ENCODE measurements at regions of chr19 and their contacts with region 1.

Region 1: DNA sequence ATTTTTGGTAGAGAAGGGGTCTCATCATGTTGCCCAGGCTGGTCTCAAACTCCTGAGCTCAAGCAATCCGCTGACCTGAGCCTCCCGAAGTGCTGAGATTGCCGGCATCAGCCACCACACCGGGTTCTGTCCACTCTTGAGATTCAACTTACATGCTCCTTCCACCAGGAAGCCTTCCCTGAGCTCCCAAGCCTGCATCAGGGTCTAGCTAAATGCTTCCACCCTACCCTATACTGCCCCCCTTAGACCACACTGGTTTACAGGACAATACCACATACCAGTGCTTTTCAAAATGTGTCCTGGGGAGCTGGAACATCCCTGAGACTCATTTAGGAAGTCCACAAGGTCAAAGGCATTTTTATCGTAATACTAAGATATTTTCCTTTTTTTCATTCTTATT is 15.1 kb upstream of the CACNG8 start:
- DNase-seq: no peak
- ATAC-seq: peak; percentile 83
- H3K4me3 Mint-ChIP-seq: no peak overlapping the region
- H3K27ac Mint-ChIP-seq: no peak overlapping the region; the same call in 1 of the 2 replicates
- H3K4me1 Mint-ChIP-seq: peaks cover 42% of the 10 kb centered on the region
- H3K27me3 Mint-ChIP-seq: no peaks in the 10 kb centered on the region
- CTCF ChIP-seq: no peak

Region 2: DNA sequence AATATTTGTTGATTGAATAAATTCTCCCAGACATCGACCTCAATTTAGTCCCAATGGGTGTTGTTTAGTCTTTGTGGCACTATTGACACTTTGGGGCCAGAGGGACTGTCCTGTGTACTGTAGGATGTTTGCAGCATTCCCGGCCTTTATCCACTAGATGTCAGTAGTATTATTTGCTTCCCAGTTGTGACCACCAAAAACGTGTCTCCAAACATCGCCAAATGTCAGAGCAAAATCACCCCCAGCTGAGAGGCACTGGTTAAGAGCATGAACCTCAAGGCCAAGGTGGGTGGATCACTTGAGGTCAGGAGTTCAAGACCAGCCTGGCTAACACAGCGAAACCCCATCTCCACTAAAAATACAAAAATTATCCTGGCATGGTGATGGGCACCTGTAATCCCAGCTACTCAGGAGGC is 138.9 kb before region 1 on chr19:
- CTCF ChIA-PET with region 1: interaction called, 34 read pairs
- POLR2A ChIA-PET with region 1: no interaction called
- DNase-seq: peak; percentile 40
- ATAC-seq: peak; percentile 74
- H3K4me3 Mint-ChIP-seq: no peak overlapping the region
- H3K27ac Mint-ChIP-seq: no peak overlapping the region
- H3K4me1 Mint-ChIP-seq: peaks cover 10% of the 10 kb centered on the region
- H3K27me3 Mint-ChIP-seq: peaks cover 9% of the 10 kb centered on the region
- CTCF ChIP-seq: no peak

Region 3: DNA sequence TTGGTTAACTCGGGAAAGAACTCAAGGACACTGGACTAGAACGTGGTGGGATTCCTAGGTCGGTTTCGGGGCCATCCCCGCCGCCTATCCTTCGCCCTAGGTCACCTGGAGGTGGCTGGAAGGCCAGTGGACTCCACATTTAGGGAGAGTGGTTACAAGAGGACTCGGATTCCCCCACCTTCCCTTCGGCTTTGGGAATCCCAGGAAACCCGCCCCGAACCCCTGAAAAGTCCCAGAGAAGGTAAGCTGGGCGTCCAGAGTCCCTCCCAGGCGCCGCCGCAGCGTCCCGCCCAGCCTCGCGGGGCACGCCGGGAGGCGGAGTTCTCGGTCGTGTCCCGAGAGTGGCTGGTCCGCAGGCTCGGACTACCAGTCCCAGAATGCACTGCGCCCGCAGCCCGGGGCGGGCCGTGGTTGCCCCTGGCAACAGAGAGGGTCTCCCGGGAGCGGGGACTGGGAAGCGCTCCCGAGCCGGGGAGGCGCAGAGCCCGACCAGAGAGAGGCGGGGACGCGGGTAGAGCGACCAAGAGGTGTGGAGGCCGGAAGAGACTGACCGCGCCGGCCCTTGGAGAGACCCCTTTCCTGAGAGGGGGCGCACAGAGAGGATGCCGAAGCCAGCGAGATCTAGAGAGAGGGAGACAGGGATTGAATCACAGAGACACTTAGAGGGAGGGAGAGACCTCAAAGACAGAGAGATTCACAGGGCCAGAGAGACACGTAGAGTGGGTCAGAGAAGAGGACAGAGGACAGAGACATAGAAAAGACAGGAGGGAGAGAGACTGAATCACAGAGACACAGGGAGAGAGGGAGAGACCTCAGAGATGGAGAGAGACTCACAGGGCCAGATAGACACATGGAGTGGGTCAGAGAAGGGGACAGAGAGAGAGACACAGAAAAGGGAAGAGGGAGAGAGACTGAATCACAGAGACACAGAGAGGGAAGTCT is 68.2 kb before region 1 on chr19:
- CTCF ChIA-PET with region 1: interaction called, 14 read pairs
- POLR2A ChIA-PET with region 1: interaction called, 9 read pairs
- DNase-seq: peak; percentile 100
- ATAC-seq: peak; percentile 84
- H3K4me3 Mint-ChIP-seq: no peak overlapping the region
- H3K27ac Mint-ChIP-seq: peak overlapping the region; percentile 81
- H3K4me1 Mint-ChIP-seq: peaks cover 27% of the 10 kb centered on the region
- H3K27me3 Mint-ChIP-seq: peaks cover 11% of the 10 kb centered on the region
- CTCF ChIP-seq: no peak

Region 4: DNA sequence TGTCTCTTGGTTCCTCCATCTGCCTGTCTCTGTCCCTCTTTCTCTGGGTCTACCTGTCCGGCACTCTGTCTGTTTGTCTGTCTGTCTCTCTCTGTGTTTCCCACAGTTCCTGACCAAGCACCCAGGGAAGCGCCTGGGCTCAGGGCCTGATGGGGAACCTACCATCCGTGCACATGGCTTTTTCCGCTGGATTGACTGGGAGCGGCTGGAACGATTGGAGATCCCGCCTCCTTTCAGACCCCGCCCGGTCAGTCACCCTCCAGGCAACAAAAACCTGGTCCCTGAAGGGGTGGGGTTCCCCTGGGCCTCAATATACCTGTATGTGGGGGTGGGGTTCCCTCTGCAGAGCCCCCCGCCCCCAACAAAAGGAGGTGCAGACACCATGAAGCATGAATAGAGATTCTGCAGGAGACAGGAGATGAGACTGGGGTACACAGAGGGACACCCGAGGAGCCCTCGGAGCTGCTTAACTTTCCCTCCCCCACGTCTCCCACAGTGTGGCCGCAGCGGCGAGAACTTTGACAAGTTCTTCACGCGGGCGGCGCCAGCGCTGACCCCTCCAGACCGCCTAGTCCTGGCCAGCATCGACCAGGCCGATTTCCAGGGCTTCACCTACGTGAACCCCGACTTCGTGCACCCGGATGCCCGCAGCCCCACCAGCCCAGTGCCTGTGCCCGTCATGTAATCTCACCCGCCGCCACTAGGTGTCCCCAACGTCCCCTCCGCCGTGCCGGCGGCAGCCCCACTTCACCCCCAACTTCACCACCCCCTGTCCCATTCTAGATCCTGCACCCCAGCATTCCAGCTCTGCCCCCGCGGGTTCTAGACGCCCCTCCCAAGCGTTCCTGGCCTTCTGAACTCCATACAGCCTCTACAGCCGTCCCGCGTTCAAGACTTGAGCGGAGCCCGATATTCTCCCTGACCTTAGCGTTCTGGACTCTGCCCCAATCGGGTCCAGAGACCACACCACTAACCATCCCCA is 41.1 kb before region 1 on chr19:
- CTCF ChIA-PET with region 1: interaction called, 102 read pairs
- POLR2A ChIA-PET with region 1: interaction called, 8 read pairs
- DNase-seq: peak; percentile 89
- ATAC-seq: peak; percentile 15
- H3K4me3 Mint-ChIP-seq: peak overlapping the region; percentile 88
- H3K27ac Mint-ChIP-seq: no peak overlapping the region; the same call in 1 of the 2 replicates
- H3K4me1 Mint-ChIP-seq: peaks cover 34% of the 10 kb centered on the region
- H3K27me3 Mint-ChIP-seq: peaks cover 61% of the 10 kb centered on the region
- CTCF ChIP-seq: peak; percentile 98

Region 5: GRCh38 chr19:53977429-53977990 is 29.9 kb after region 1 on chr19:
- CTCF ChIA-PET with region 1: interaction called, 39 read pairs
- POLR2A ChIA-PET with region 1: interaction called, 35 read pairs
- DNase-seq: peak; percentile 82
- ATAC-seq: 0 out of 2 replicates have a peak, but pooled peaks have one; percentile 1
- H3K4me3 Mint-ChIP-seq: peak overlapping the region; percentile 93
- H3K27ac Mint-ChIP-seq: peak overlapping the region; percentile 94
- H3K4me1 Mint-ChIP-seq: peaks cover 15% of the 10 kb centered on the region
- H3K27me3 Mint-ChIP-seq: peaks cover 4% of the 10 kb centered on the region; the same call in 1 of the 2 replicates
- CTCF ChIP-seq: no peak

Region 6: DNA sequence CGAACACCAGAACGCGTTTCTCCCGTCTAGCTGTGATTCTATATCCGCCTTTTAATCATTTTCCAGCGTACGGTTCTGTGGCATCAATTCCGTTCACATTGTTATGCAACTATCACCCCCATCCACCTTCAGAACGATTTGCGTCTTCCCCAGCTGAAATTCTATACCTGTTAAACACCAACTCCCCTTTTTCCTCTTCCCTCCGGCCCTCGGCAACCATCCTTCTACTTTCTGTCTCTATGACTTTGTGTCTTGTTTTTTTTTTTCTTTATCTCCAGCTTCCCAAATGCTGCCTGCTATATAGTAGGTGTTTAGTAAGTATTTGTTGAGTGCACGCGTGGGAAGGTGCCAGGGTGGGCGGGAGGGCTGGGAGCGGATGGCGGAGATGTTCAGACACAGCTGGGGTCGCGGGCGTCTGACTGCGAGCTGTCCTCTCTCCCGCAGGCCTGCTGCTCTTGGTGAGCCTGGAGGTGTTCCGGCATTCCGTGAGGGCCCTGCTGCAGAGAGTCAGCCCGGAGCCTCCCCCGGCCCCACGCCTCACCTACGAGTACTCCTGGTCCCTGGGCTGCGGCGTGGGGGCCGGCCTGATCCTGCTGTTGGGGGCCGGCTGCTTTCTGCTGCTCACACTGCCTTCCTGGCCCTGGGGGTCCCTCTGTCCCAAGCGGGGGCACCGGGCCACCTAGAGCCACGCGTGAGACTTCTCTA is 64.0 kb after region 1 on chr19:
- CTCF ChIA-PET with region 1: interaction called, 14 read pairs
- POLR2A ChIA-PET with region 1: no interaction called
- DNase-seq: peak; percentile 68
- ATAC-seq: peak; percentile 91
- H3K4me3 Mint-ChIP-seq: peak overlapping the region; percentile 50
- H3K27ac Mint-ChIP-seq: peak overlapping the region; percentile 66
- H3K4me1 Mint-ChIP-seq: peaks cover 27% of the 10 kb centered on the region
- H3K27me3 Mint-ChIP-seq: peaks cover 15% of the 10 kb centered on the region
- CTCF ChIP-seq: no peak

Region 7: DNA sequence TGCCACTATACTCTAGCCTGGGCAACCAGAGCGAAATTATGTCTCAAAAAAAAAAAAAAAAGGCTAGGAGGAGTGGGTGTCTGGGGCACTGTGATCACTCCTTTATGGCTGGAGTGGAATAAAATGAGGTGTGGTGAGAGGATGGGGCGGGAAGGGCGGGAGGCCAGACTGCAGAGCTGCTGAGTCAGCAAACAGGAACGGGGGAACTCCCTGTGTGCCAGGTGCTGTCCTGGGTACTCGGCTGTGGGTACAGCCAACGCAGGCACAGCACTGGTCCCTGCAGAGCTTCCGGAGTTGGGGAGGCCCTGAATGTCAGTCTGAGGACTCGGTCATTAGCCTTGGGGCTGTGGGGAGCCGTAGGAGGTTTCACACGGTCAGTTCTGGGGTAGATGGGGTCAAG is 173.6 kb after region 1 on chr19:
- CTCF ChIA-PET with region 1: no interaction called
- POLR2A ChIA-PET with region 1: no interaction called
- DNase-seq: no peak
- ATAC-seq: no peak
- H3K4me3 Mint-ChIP-seq: no peak overlapping the region
- H3K27ac Mint-ChIP-seq: no peak overlapping the region
- H3K4me1 Mint-ChIP-seq: peaks cover 8% of the 10 kb centered on the region
- H3K27me3 Mint-ChIP-seq: no peaks in the 10 kb centered on the region
- CTCF ChIP-seq: no peak

Measured in WTC11 (cell line).